ENCODE measurements at regions of chr2 and their contacts with region 1.

Region 1: GRCh38 chr2:160109936-160110673 is 47.7 kb upstream of the PLA2R1 start:
- DNase-seq: peak; percentile 69 to 82
- ATAC-seq: peak; percentile 91
- H3K4me3 ChIP-seq: no peak overlapping the region
- H3K27ac ChIP-seq: no peak overlapping the region
- H3K4me1 ChIP-seq: no peaks in the 10 kb centered on the region
- H3K27me3 ChIP-seq: no peaks in the 10 kb centered on the region

Region 2: DNA sequence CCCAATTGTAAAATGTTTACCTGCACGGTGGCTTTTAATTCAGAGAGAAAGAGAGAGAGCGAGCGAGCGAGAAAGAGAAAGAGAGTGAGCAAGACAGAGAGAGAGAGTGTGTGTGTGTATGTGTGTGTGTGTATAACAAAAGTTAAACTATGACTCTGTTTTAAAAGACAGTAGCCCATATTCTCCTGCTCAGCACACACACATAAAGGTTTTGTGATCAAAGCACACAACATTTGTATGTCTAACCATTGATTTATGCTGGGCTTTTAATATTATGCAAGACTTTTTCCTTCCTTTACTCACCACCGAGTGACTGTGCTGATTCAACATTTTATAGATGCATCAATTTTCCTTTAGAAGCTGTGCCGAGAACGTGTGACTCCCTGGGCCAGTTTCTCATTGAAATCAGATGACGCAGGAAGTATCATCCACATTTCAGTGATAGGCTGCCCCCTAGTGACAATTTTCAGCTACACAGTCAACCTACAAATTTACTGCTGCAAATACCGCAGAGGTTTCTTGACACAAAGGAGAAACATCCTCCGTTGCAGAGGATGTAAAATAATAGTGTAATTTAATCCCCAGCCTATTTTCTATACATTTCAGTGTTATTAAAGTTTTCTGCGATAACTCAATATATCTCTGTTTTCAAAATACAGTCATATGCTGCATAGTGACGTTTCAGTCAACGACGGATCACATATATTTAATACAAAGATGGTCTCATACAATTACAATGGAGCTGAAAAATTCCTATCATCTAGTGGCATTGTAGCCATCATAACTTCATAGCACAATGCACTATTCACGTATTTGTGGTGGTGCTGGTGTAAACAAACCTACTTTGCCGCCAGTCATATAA is 884.3 kb after region 1 on chr2:
- intact Hi-C with region 1: loop called (anchors 2 kb)
- DNase-seq: peak in 1 of 2 donors; percentile 74
- ATAC-seq: peak; percentile 89
- H3K4me3 ChIP-seq: no peak overlapping the region
- H3K27ac ChIP-seq: no peak overlapping the region
- H3K4me1 ChIP-seq: no peaks in the 10 kb centered on the region
- H3K27me3 ChIP-seq: no peaks in the 10 kb centered on the region

Region 3: DNA sequence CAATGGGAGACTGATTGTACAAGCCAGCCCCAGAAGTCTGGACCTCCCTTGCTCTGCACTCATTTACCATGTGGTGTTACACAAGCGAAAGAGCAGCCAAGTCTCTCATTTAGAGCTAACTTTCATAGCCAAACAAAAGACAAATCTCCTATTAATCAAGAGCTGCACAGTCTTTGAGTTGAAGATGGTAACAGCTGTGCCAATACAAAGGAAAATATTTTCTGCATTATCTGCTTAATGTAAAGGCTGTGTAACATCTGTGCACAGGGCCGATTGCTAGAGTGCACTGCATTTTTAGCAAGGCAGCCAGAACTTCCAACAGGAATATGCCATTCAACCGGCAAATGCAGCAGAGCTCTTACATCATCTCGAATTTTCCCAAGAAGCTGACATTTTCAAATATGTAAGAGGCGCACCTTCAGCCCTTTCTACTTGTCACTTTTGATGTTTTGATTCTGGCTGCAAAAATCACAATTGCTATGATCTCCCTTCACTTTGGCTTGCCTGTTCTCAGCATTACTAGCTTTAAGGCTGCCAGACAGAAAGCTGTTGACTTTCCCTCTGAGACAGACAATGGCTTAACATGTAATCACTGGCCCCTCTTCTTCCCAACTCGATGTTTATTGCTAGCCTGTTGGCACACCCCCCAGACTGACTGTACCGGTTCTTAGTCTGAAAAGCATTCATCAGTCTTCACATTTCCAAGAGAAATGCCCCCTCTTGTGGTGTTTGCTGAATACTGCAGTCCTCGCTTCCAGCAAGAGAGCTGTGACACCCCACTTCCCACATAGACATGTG is 953.3 kb after region 1 on chr2:
- intact Hi-C with region 1: loop called in 1 of 2 experiments (anchors 10 kb)
- DNase-seq: peak; percentile 76 to 80
- ATAC-seq: peak; percentile 94
- H3K4me3 ChIP-seq: peak overlapping the region in 1 of 2 donors; percentile 4
- H3K27ac ChIP-seq: no peak overlapping the region
- H3K4me1 ChIP-seq: peaks cover 0 to 3% of the 10 kb centered on the region in 2 donors
- H3K27me3 ChIP-seq: no peaks in the 10 kb centered on the region